Spleen (tissue), 13 donors: ENCODE measurements at regions of chr1 and their contacts with region 1.

Region 1: DNA sequence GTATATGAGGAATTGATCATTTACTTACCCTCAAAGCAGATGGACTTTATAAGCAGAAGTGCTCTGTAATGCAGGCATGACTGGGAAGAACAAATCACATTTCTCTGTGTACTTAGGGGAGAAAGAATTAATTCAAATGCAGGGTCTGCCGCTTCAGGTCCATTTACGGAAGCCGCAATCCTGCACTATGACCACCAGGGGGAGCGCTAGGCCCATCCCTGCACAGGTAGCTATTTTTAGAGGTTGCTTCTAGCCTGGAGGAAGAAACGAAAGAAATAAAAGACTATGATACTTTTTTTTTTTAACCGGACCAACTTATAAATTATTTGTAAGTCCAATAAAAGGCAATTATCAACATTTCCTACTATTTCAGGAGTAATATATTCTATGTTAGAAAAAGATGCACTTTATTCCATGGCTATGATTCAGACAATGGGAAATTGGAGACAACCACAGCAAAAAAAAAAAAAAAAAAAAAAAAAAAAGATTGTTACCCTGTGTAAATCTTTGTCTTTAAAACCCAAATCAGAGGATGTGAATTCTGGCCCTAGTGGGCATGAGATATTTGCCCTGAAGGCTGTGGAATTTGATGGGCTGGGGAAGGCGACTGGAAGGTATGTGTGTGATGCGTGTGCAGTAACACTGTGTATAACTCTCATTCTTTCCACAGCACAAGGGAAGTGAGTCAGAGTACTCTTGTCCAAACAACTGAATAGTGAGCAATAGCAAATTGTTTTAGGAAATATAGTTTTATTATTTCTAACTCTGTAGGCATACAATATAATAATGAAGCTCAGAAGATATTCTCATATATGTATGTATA is 12.9 kb upstream of the FYB2 start:
- DNase-seq: peak; percentile 87
- H3K4me3 ChIP-seq: no peak overlapping the region
- H3K27ac ChIP-seq: no peak overlapping the region
- H3K4me1 ChIP-seq: peaks cover 0 to 8% (median 3%) of the 10 kb centered on the region in 6 donors
- H3K27me3 ChIP-seq: peaks cover 0 to 33% (median 0%) of the 10 kb centered on the region in 7 donors
- CTCF ChIP-seq: peak; percentile 78 to 96 (median 93)
- POLR2A ChIP-seq: no peak

Region 2: GRCh38 chr1:56330391-56331026 is 501.6 kb before region 1 on chr1:
- intact Hi-C with region 1: no loop called
- DNase-seq: no peak
- H3K4me3 ChIP-seq: no peak overlapping the region
- H3K27ac ChIP-seq: no peak overlapping the region
- H3K4me1 ChIP-seq: peaks cover 0 to 13% (median 0%) of the 10 kb centered on the region in 6 donors
- H3K27me3 ChIP-seq: no peaks in the 10 kb centered on the region
- CTCF ChIP-seq: no peak
- POLR2A ChIP-seq: no peak

Region 3: DNA sequence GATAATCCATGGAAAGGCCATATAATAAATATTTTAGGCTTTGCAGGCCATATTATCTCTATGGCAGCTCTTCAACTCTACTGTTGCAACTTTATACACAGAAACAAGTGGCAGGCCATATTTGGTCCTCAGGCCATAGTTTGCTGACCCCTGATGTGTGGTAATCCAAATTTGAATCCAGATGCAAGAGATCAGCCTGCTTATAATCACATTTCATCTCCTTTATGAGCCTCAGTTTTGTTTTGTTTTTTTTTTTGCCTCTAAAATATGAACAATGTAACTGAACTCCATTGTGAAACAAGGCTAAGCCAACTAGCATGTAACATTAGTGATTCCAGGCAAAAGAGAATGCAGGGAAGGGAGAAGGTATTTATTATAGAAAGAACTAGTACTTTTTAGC is 105.4 kb before region 1 on chr1:
- intact Hi-C with region 1: no loop called
- DNase-seq: no peak
- H3K4me3 ChIP-seq: no peak overlapping the region
- H3K27ac ChIP-seq: no peak overlapping the region
- H3K4me1 ChIP-seq: no peaks in the 10 kb centered on the region
- H3K27me3 ChIP-seq: peaks cover 0 to 29% (median 3%) of the 10 kb centered on the region in 7 donors
- CTCF ChIP-seq: no peak
- POLR2A ChIP-seq: no peak

Region 4: DNA sequence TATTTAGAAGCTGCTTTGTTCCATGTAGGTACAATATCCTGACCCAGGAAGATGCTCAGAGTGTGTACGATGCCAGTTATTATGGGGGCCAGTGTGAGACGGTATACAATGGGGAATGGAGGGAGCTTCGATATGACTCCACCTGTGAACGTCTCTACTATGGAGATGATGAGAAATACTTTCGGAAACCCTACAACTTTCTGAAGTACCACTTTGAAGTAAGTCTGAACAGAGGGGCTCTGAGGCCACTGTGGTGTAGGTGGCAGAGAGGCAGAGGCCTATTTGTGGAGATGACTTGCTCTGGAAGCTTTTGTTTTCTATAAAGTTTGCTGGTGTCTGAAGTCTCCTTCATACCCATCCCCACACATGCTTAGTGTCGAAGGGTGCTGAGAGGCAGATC is 49.3 kb after region 1 on chr1:
- intact Hi-C with region 1: no loop called
- DNase-seq: no peak
- H3K4me3 ChIP-seq: no peak overlapping the region
- H3K27ac ChIP-seq: no peak overlapping the region
- H3K4me1 ChIP-seq: peaks cover 0 to 6% (median 0%) of the 10 kb centered on the region in 6 donors
- H3K27me3 ChIP-seq: no peaks in the 10 kb centered on the region
- CTCF ChIP-seq: no peak
- POLR2A ChIP-seq: no peak

Region 5: DNA sequence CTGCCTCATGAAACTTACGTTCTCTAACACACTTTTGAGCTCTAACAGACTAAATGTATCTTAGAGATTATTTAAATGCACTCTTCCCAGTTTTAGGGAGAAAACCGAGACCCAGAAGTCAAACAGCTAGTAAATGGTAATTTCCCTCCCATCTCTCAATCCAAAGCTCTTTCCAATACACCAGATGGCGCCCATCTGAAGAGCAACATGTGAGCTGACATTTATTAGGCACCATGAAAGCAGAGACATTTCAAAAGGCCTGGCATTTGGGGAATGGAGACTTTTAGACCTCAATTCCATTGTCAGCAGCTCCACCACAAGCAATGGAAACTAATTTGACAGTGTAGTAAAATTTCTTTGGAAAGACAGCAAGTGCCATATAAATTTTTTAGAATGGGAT is 400.4 kb after region 1 on chr1:
- intact Hi-C with region 1: no loop called
- DNase-seq: no peak
- H3K4me3 ChIP-seq: no peak overlapping the region
- H3K27ac ChIP-seq: no peak overlapping the region
- H3K4me1 ChIP-seq: no peaks in the 10 kb centered on the region
- H3K27me3 ChIP-seq: no peaks in the 10 kb centered on the region
- CTCF ChIP-seq: no peak
- POLR2A ChIP-seq: no peak

Region 6: GRCh38 chr1:58047265-58047858 is 1215.3 kb after region 1 on chr1:
- intact Hi-C with region 1: loop called (anchors 5 kb)
- DNase-seq: no peak
- H3K4me3 ChIP-seq: no peak overlapping the region
- H3K27ac ChIP-seq: no peak overlapping the region
- H3K4me1 ChIP-seq: no peaks in the 10 kb centered on the region
- H3K27me3 ChIP-seq: no peaks in the 10 kb centered on the region
- CTCF ChIP-seq: peak in 10 of 11 experiments; percentile 10 to 70 (median 57)
- POLR2A ChIP-seq: no peak

Region 7: DNA sequence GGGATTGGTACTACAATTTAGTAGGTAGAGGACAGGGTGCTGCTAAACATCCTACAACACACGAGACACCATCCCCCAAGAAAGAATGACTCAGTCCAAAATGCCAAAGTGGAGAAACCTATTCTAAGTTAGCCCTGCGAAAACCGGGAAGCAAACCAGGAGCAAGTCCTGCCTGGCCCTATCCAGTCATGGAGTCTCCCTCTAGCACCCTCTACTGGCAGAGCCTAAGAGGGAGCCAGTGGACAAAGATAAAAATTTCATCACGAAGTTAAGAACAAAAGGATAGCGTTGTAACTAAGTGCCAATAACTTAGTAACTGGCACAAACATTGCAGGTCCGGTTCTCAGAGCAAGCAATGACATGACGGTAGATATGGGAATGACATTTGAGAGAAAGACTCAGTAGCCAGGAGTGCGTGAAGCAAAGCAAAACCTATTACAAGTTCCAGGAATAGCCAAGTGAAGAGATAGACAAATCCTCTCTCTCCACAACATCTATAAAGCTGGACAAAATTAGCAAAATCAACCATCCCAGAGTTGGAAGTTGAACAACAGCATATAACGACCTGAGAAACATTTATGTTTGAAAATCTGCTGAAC is 1331.0 kb after region 1 on chr1:
- intact Hi-C with region 1: loop called (anchors 10 kb)
- DNase-seq: no peak
- H3K4me3 ChIP-seq: no peak overlapping the region
- H3K27ac ChIP-seq: no peak overlapping the region
- H3K4me1 ChIP-seq: no peaks in the 10 kb centered on the region
- H3K27me3 ChIP-seq: no peaks in the 10 kb centered on the region
- CTCF ChIP-seq: peak in 10 of 11 experiments; percentile 15 to 72 (median 52)
- POLR2A ChIP-seq: no peak